ENCODE measurements at regions of chr6 and their contacts with region 1.

Region 1: DNA sequence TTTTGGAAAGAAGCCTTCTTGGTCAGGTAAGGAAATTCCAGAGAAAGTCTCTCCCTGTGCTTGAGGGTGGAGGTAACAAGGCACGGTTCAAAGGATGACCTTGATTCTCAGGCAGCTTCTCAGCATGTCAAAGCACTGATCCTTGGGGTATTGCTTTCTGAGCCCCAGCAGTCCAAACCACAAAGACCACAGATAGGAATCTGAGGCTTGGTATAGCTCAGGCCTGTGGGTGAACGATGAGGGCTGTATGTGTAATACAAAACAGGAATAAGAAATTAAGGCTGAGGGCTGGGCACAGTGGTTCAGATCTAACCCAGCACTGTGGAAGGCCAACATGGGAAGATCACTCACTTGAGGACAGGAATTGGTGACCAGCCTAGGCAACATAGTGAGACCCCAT is 70.2 kb upstream of the SLC22A1 start:
- DNase-seq: no peak
- ATAC-seq: no peak
- H3K4me3 ChIP-seq: no peak overlapping the region
- H3K27ac ChIP-seq: no peak overlapping the region
- H3K4me1 ChIP-seq: no peaks in the 10 kb centered on the region
- H3K27me3 ChIP-seq: no peaks in the 10 kb centered on the region
- CTCF ChIP-seq: no peak
- POLR2A ChIP-seq: no peak

Region 2: DNA sequence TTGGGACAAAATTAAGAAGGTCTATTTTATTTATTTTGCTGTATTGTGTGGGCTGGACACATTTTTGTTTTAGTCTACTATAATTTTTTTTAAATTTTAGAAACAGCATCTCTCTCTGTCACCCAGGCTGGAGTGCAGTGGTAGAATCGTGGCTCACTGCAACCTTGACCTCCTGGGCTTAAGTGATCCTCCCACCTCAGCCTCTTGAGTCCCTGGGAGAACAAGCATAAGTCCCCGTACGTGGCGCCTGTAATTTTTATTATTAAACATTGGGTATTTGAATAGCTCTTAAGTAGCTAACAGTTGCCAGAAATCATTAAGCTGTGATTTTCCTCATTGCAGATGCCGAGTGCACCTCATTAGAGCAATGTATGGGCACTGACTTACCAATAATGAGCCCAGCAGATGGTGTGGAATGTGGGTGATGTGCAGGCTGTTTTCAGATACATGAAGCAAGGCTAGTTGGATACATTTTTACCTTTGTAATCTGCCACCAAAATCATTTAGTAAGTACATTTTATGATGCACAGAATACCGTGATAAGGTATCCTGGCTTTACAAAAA is 170.9 kb before region 1 on chr6:
- in situ Hi-C with region 1: no loop called
- intact Hi-C with region 1: loop called (anchors 10 kb)
- DNase-seq: no peak
- ATAC-seq: no peak
- H3K4me3 ChIP-seq: no peak overlapping the region
- H3K27ac ChIP-seq: peak overlapping the region in 1 of 4 donors; percentile 62
- H3K4me1 ChIP-seq: peaks cover 7 to 9% of the 10 kb centered on the region in 2 donors
- H3K27me3 ChIP-seq: no peaks in the 10 kb centered on the region
- CTCF ChIP-seq: no peak
- POLR2A ChIP-seq: no peak

Region 3: GRCh38 chr6:160112628-160113299 is 61.4 kb after region 1 on chr6:
- in situ Hi-C with region 1: no loop called
- intact Hi-C with region 1: no loop called
- DNase-seq: no peak
- ATAC-seq: no peak
- H3K4me3 ChIP-seq: no peak overlapping the region
- H3K27ac ChIP-seq: no peak overlapping the region
- H3K4me1 ChIP-seq: no peaks in the 10 kb centered on the region
- H3K27me3 ChIP-seq: no peaks in the 10 kb centered on the region
- CTCF ChIP-seq: no peak
- POLR2A ChIP-seq: no peak